Caco-2 (cell line): ENCODE measurements at regions of chr7 and their contacts with region 1.

Region 1: DNA sequence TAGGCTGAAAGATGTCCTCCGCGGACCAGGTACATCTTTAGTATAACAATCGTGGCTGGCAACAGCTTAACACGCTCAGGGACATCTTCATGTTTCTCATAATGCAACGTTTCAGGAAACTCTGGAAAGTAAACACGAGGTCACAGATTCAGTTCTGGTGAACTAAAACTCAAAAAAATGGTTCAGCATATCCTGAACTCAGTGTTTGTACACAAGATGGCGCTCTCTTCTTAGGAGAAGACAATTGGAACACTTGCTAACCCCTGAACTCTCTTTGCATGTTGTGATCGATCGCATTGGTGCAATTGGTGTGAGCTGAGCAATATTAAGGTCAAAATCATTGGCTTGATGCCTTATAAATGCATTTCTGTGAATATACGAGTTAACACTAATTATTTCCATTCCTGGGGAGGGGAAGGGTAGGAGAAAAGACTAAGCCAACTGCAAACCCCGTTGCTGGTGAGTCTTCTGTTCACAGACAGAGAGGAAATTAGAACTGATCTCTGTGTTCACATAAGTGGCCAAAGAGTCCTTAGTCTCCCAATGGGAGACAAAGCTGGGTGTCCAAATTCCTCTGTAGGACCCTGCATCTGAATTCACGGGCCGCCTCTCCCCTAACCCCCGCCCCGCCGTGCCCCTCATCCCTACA is 52.6 kb upstream of the FAM180A start:
- DNase-seq: peak in 1 of 2 experiments; percentile 74
- H3K4me3 ChIP-seq: no peak overlapping the region
- H3K4me3 Mint-ChIP-seq: no peak overlapping the region
- H3K27ac Mint-ChIP-seq: no peak overlapping the region
- H3K4me1 ChIP-seq: 0 out of 2 replicates have a peak, but pooled peaks cover 6% of the 10 kb centered on the region
- H3K4me1 Mint-ChIP-seq: peaks cover 15% of the 10 kb centered on the region
- H3K27me3 ChIP-seq: no peaks in the 10 kb centered on the region
- H3K27me3 Mint-ChIP-seq: no peaks in the 10 kb centered on the region
- CTCF ChIP-seq: peak; percentile 78 to 88

Region 2: DNA sequence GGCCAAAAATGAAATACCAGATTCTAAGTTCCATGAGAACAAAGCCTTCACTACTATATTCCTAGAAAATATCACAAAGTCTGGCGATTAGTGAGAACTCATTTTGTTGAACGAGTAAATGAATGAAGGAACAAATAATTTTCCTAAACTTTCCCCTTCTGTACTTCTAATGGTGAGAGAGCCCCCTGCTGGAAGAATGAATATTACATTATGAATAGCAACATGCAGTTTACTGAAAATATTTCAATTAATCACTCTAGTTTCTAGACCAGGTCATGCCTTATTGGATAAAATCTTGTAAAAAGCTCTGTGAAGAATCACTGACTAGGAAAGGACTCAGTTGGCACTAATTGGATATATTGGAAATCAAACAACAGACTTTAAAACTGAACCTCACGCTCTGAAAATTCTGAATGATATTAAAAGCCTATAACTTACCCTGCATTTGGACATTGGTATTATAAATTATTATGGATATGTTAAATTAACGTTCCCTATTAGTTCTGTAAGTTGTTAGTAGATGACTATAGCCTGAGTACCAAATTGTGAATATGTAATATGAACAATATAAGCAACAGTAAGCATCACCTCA is 208.4 kb after region 1 on chr7:
- CTCF ChIA-PET with region 1: no interaction called
- POLR2A ChIA-PET with region 1: no interaction called
- intact Hi-C with region 1: loop called (anchors 1 kb)
- DNase-seq: peak in 1 of 2 experiments; percentile 60
- H3K4me3 ChIP-seq: no peak overlapping the region
- H3K4me3 Mint-ChIP-seq: no peak overlapping the region
- H3K27ac Mint-ChIP-seq: no peak overlapping the region
- H3K4me1 ChIP-seq: no peaks in the 10 kb centered on the region
- H3K4me1 Mint-ChIP-seq: no peaks in the 10 kb centered on the region
- H3K27me3 ChIP-seq: no peaks in the 10 kb centered on the region; the same call in 1 of the 2 replicates
- H3K27me3 Mint-ChIP-seq: peaks cover 5% of the 10 kb centered on the region
- CTCF ChIP-seq: peak; percentile 46 to 85

Region 3: GRCh38 chr7:136086712-136087111 is 285.5 kb after region 1 on chr7:
- CTCF ChIA-PET with region 1: no interaction called
- POLR2A ChIA-PET with region 1: no interaction called
- intact Hi-C with region 1: loop called (anchors 10 kb)
- DNase-seq: peak; percentile 77 to 81
- H3K4me3 ChIP-seq: peak overlapping the region; percentile 24
- H3K4me3 Mint-ChIP-seq: peak overlapping the region; percentile 59
- H3K27ac Mint-ChIP-seq: peak overlapping the region; percentile 20
- H3K4me1 ChIP-seq: peaks cover 11% of the 10 kb centered on the region; the same call in 1 of the 2 replicates
- H3K4me1 Mint-ChIP-seq: no peaks in the 10 kb centered on the region
- H3K27me3 ChIP-seq: no peaks in the 10 kb centered on the region
- H3K27me3 Mint-ChIP-seq: peaks cover 6% of the 10 kb centered on the region
- CTCF ChIP-seq: no peak

Region 4: DNA sequence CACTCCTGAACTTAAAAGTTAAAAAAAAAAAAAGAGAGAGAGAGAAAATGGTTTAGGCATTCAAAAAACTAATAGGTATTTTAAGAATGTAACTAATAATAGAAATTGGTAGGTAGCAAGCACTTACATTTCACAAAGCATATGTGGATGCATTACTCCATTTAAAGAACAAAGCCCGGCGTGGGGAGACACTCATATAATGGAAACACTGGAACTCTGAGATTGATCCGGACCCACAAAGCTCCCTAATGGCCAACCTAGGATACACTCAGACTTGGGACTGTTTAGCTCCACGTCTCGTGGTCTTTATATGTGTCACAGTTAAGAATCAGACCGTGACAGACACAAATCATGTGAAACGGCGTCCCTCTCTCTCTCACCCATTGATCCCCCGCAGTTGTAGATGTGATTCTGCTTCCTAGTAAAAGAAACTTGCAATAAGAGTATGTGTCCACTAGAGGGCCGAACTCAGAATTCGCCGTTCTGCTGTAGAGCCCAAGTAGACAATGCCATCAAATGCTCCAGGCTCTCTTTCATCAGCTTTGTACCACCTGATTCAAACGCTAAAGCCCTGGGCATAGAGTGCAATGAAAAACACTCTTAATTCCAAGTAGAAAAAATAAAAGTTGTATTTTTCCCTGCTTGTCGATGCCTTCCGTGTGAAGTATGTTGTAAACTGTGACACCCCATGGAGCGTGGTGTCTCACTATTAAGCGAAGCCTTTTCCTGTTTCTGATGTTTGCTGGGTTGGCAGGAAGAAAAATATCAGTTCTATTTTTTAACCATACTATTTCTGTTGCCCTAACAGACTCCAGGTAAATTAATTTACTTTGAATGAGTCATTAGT is 605.0 kb after region 1 on chr7:
- CTCF ChIA-PET with region 1: no interaction called
- POLR2A ChIA-PET with region 1: no interaction called
- intact Hi-C with region 1: loop called (anchors 5 kb)
- DNase-seq: peak; percentile 36 to 59
- H3K4me3 ChIP-seq: no peak overlapping the region
- H3K4me3 Mint-ChIP-seq: peak overlapping the region; percentile 65
- H3K27ac Mint-ChIP-seq: no peak overlapping the region
- H3K4me1 ChIP-seq: no peaks in the 10 kb centered on the region
- H3K4me1 Mint-ChIP-seq: no peaks in the 10 kb centered on the region
- H3K27me3 ChIP-seq: no peaks in the 10 kb centered on the region
- H3K27me3 Mint-ChIP-seq: peaks cover under 1% of the 10 kb centered on the region
- CTCF ChIP-seq: peak; percentile 72 to 81